PC-9 (cell line): ENCODE measurements at regions of chr10 and their contacts with region 1.

Region 1: GRCh38 chr10:89738551-89739209 is 37.3 kb downstream of the KIF20B start:
- DNase-seq: no peak
- H3K4me3 ChIP-seq: no peak overlapping the region
- H3K27ac ChIP-seq: no peak overlapping the region
- H3K4me1 ChIP-seq: no peaks in the 10 kb centered on the region
- H3K27me3 ChIP-seq: no peaks in the 10 kb centered on the region
- CTCF ChIP-seq: no peak

Region 2: GRCh38 chr10:89516149-89516832 is 222.4 kb before region 1 on chr10:
- CTCF ChIA-PET with region 1: no interaction called
- POLR2A ChIA-PET with region 1: no interaction called
- intact Hi-C with region 1: no loop called
- DNase-seq: peak in 1 of 2 experiments; percentile 55
- H3K4me3 ChIP-seq: no peak overlapping the region
- H3K27ac ChIP-seq: no peak overlapping the region
- H3K4me1 ChIP-seq: no peaks in the 10 kb centered on the region
- H3K27me3 ChIP-seq: no peaks in the 10 kb centered on the region
- CTCF ChIP-seq: no peak

Region 3: GRCh38 chr10:89643431-89644331 is 95.0 kb before region 1 on chr10:
- CTCF ChIA-PET with region 1: no interaction called
- POLR2A ChIA-PET with region 1: interaction called, 11 read pairs
- intact Hi-C with region 1: no loop called
- DNase-seq: peak; percentile 77 to 96
- H3K4me3 ChIP-seq: peak overlapping the region; percentile 83
- H3K27ac ChIP-seq: peak overlapping the region; percentile 56
- H3K4me1 ChIP-seq: peaks cover 25% of the 10 kb centered on the region; the same call in 1 of the 2 replicates
- H3K27me3 ChIP-seq: no peaks in the 10 kb centered on the region
- CTCF ChIP-seq: no peak

Region 4: DNA sequence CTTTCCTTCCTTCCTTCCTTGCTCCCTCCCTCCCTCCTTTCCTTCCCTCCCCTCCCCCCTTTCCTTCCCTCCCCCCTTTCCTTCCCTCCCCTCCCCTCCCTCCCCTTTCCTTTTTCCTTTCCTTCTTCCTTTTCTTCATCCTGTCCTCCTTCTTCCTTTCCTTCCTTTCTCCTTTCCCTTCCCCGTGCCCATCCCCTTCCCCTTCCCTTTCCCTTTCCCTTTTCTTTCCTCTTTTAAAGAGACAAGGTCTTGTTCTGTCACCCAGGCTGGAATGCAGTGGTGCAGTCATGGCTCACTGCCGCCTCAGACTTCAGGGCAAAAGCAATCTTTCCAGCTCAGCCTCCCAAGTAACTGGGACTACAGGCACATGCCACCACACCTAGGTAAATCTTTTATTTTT is 16.7 kb after region 1 on chr10:
- CTCF ChIA-PET with region 1: no interaction called
- POLR2A ChIA-PET with region 1: no interaction called
- intact Hi-C with region 1: no loop called
- DNase-seq: no peak
- H3K4me3 ChIP-seq: no peak overlapping the region
- H3K27ac ChIP-seq: no peak overlapping the region
- H3K4me1 ChIP-seq: no peaks in the 10 kb centered on the region
- H3K27me3 ChIP-seq: no peaks in the 10 kb centered on the region
- CTCF ChIP-seq: no peak